ENCODE measurements at regions of chr4 and their contacts with region 1.

Region 1: DNA sequence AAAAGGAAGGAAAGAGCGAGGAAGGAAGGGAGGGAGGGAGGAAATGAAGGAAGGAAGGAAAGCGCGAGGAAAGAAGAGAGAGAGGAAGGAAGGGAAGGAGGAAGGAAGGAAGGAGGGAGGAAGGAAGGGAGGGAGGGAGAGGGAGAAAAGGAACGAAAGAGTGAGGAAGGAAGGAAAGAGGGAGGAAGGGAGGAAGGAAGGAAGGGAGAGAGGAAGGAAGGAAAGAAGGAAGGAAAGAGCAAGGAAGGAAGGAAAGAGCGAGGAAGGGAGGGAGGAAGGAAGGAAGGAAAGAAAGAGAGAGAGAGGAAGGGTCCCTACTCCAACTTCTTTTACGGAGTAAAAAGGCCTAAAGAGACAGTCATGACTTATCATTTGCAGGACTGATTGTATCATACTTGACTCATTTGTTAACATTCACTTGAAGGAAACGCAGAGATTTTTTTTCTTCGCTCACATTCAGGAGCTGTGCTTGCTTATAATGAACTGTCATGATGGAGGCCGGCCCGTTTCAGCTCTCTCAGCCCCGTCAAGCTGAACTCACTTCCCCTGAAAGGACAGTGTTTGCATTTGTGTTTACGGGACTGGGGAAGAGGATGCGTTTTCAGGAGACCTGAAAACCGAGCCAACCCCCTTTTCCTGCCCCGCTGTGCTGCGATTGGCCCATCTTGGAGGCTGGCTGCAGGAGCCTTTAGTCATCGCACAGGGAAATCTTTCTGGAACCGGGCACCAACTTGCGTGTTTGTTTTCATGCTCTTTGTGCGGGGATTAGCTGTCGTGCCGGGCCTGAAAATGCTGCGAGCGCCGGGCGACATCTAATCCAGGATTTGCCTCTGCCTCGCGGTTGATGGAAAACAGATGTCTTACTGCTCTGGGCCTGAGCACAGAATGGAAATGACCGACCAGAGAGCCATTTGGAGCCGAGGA is 17.8 kb downstream of the TRIM2 start:
- DNase-seq: peak; percentile 82
- H3K4me3 ChIP-seq: peak overlapping the region; percentile 39 to 73 (median 56)
- H3K27ac ChIP-seq: peak overlapping the region; percentile 57
- H3K4me1 ChIP-seq: peaks cover 14% of the 10 kb centered on the region
- H3K27me3 ChIP-seq: peaks cover 4 to 5% of the 10 kb centered on the region in 2 experiments
- CTCF ChIP-seq: no peak
- POLR2A ChIP-seq: no peak

Region 2: GRCh38 chr4:153153339-153153871 is 68.6 kb before region 1 on chr4:
- CTCF ChIA-PET with region 1: interaction called, 4 read pairs
- POLR2A ChIA-PET with region 1: no interaction called
- dilution Hi-C with region 1: no loop called
- intact Hi-C with region 1: loop called (anchors 2 kb)
- DNase-seq: peak; percentile 27
- H3K4me3 ChIP-seq: peak overlapping the region; percentile 8 to 63 (median 50)
- H3K27ac ChIP-seq: no peak overlapping the region
- H3K4me1 ChIP-seq: peaks cover 18% of the 10 kb centered on the region
- H3K27me3 ChIP-seq: peaks cover 17 to 31% of the 10 kb centered on the region in 2 experiments
- CTCF ChIP-seq: no peak
- POLR2A ChIP-seq: no peak

Region 3: DNA sequence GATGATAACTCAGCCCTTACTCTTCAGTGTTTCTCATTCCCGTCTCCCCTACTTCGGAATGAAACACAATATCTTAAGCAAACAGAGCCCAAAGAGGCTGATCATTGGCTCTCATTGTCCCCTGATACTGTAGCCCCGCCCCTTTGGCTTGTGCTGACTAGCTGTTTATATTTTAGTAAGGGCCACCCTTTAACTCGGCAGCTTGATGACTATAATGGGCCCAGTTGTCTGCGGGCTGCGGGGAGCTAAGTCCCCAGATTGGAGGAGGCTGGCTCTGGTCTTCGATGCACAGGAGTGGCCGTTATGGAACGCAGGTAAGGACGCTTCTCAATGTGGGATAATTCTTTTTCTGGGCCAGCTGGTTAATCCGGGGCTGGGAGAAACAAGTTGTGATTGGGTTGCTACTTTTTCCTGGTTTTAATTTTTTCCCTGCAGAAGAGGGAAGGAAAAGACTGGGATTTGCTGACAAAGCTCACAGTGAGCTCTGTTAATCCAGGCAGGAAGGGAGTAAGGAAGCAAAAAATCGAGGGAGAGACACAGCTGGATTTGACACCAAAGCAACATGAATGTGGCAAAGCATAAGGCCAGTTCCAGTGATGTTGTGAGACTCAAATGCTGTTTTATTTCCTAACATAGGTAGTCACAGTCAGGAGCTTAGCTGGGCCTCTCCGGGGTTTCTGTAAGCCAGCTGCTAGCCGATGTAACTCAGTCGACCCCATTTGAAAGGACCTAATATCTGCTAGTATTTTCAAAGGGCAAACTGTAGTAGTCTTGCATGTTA is 17.6 kb before region 1 on chr4 and contains the start of gene TRIM2:
- CTCF ChIA-PET with region 1: interaction called, 13 read pairs
- POLR2A ChIA-PET with region 1: no interaction called
- dilution Hi-C with region 1: no loop called
- intact Hi-C with region 1: loop called (anchors 1 kb)
- DNase-seq: peak; percentile 67
- H3K4me3 ChIP-seq: no peak within 1 kb of the TSS
- H3K27ac ChIP-seq: no peak within 1 kb of the TSS
- H3K4me1 ChIP-seq: peaks cover 2% of the 10 kb centered on the region
- H3K27me3 ChIP-seq: no peaks in the 10 kb centered on the region
- CTCF ChIP-seq: no peak
- POLR2A ChIP-seq: no peak
- total RNA-seq, gene TRIM2: 16.4 and 19.7 TPM in 2 replicates

Region 4: GRCh38 chr4:153249199-153250041 is 27.4 kb after region 1 on chr4:
- CTCF ChIA-PET with region 1: interaction called, 5 read pairs
- POLR2A ChIA-PET with region 1: no interaction called
- dilution Hi-C with region 1: no loop called
- intact Hi-C with region 1: loop called (anchors 1 kb)
- DNase-seq: peak; percentile 78
- H3K4me3 ChIP-seq: peak overlapping the region; percentile 55 to 68 (median 60)
- H3K27ac ChIP-seq: peak overlapping the region; percentile 30
- H3K4me1 ChIP-seq: peaks cover 9% of the 10 kb centered on the region
- H3K27me3 ChIP-seq: no peaks in the 10 kb centered on the region
- CTCF ChIP-seq: no peak
- POLR2A ChIP-seq: no peak

Region 5: GRCh38 chr4:153318696-153319320 is 96.8 kb after region 1 on chr4:
- CTCF ChIA-PET with region 1: no interaction called
- POLR2A ChIA-PET with region 1: no interaction called
- dilution Hi-C with region 1: no loop called
- intact Hi-C with region 1: loop called (anchors 5 kb)
- DNase-seq: peak; percentile 62
- H3K4me3 ChIP-seq: no peak overlapping the region
- H3K27ac ChIP-seq: no peak overlapping the region
- H3K4me1 ChIP-seq: no peaks in the 10 kb centered on the region
- H3K27me3 ChIP-seq: no peaks in the 10 kb centered on the region
- CTCF ChIP-seq: peak; percentile 55 to 62
- POLR2A ChIP-seq: no peak

Region 6: DNA sequence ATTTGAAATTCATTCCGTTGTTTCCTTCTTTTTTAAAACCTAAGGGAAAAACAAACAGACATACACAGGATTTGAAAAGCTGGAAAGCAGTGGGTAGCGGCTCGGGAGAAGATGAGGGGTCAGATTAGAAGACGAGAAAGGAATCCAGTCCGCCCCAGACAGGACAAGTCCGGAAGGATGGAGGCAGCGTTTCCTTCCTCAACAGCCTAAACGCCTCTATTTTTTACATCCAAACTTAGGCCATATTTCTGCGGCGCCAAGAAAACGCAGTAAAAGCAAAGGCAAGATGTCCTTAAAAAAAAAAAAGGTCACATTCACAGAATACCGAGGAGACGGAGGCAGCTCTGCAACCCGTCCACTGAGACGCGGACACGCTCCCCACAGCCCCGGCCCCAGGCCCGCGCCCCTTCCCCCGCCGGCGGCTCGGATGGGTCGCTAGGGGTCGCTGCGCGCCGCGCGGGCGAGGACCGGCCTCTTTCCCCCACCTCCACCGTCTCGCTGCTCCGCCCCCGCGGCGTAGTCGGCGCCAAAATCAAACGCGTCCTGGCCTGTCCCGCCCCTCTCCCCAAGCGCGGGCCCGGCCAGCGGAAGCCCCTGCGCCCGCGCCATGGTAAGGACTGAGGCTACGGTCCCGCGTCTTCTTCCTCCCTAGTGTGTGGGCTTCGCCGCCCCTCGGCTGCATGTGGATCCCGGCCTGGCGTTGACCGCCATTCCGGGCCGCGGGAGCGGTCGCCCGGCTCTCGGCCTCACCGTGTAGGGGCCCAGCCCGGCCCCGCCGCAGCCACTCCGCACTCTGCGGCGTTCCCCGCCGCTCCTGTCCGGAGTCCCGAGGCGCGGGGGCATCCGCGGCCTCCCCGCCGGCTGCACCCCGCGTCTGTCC is 122.3 kb after region 1 on chr4 and contains the start of gene MND1:
- CTCF ChIA-PET with region 1: interaction called, 5 read pairs
- POLR2A ChIA-PET with region 1: no interaction called
- dilution Hi-C with region 1: no loop called
- intact Hi-C with region 1: loop called (anchors 2 kb)
- DNase-seq: peak; percentile 77
- H3K4me3 ChIP-seq: peak within 1 kb of the TSS; percentile 54 to 82 (median 76)
- H3K27ac ChIP-seq: peak within 1 kb of the TSS; percentile 78
- H3K4me1 ChIP-seq: peaks cover 25% of the 10 kb centered on the region
- H3K27me3 ChIP-seq: no peaks in the 10 kb centered on the region
- CTCF ChIP-seq: peak; percentile 77 to 87
- POLR2A ChIP-seq: no peak
- total RNA-seq, gene MND1: 7.7 and 8.2 TPM in 2 replicates

Measured in endothelial cell of umbilical vein (primary cell).